GM23248 (cell line): ENCODE measurements at regions of chr6 and their contacts with region 1.

Region 1: GRCh38 chr6:134097114-134097707 is 44.8 kb upstream of the SLC2A12 start:
- DNase-seq: peak; percentile 79
- H3K4me3 ChIP-seq: no peak overlapping the region
- H3K27ac ChIP-seq: no peak overlapping the region
- H3K4me1 ChIP-seq: no peaks in the 10 kb centered on the region
- H3K27me3 ChIP-seq: peaks cover 11% of the 10 kb centered on the region; the same call in 1 of the 2 replicates

Region 2: GRCh38 chr6:132962936-132963868 is 1134.0 kb before region 1 on chr6:
- in situ Hi-C with region 1: loop called (anchors 25 kb)
- DNase-seq: peak; percentile 73
- H3K4me3 ChIP-seq: no peak overlapping the region
- H3K27ac ChIP-seq: no peak overlapping the region
- H3K4me1 ChIP-seq: peaks cover 10% of the 10 kb centered on the region; the same call in 1 of the 2 replicates
- H3K27me3 ChIP-seq: peaks cover 19% of the 10 kb centered on the region; the same call in 1 of the 2 replicates

Region 3: GRCh38 chr6:133568970-133569889 is 528.0 kb before region 1 on chr6:
- in situ Hi-C with region 1: loop called (anchors 10 kb)
- DNase-seq: peak; percentile 98
- H3K4me3 ChIP-seq: peak overlapping the region; percentile 72
- H3K27ac ChIP-seq: peak overlapping the region; percentile 87
- H3K4me1 ChIP-seq: peaks cover 25% of the 10 kb centered on the region
- H3K27me3 ChIP-seq: no peaks in the 10 kb centered on the region

Region 4: DNA sequence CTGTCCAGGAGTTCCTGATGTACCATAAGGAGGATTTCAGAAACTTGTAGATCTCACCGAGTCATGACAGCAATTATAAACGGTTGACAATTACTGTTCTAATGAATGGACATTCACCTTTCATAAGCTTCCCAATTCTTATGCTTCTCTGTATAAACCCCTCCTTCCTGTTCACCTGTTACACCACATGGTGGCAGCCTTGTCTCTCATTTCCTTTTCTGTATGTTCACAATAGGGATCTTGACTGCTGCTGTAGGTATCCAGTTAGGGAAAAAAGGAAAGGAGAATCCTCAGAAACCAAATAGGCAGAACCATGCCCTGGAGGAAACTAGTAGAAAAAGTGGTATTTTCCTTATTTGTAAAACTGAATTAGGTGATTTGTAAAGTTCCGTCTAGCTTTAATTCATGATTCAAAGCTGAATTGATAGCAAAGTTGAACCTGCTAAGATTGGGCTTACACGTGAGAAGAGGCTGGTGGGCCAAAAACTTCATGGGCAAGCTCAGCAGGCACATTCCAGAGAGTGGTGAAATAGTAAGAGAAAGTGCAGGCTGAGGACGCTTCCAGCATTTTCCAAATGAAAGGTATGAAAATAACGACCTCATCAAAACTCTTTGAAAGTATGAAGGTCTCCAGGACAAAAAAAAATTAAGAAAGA is 173.1 kb before region 1 on chr6:
- in situ Hi-C with region 1: loop called (anchors 5 kb)
- DNase-seq: peak; percentile 83
- H3K4me3 ChIP-seq: no peak overlapping the region
- H3K27ac ChIP-seq: no peak overlapping the region
- H3K4me1 ChIP-seq: no peaks in the 10 kb centered on the region
- H3K27me3 ChIP-seq: peaks cover 24% of the 10 kb centered on the region

Region 5: DNA sequence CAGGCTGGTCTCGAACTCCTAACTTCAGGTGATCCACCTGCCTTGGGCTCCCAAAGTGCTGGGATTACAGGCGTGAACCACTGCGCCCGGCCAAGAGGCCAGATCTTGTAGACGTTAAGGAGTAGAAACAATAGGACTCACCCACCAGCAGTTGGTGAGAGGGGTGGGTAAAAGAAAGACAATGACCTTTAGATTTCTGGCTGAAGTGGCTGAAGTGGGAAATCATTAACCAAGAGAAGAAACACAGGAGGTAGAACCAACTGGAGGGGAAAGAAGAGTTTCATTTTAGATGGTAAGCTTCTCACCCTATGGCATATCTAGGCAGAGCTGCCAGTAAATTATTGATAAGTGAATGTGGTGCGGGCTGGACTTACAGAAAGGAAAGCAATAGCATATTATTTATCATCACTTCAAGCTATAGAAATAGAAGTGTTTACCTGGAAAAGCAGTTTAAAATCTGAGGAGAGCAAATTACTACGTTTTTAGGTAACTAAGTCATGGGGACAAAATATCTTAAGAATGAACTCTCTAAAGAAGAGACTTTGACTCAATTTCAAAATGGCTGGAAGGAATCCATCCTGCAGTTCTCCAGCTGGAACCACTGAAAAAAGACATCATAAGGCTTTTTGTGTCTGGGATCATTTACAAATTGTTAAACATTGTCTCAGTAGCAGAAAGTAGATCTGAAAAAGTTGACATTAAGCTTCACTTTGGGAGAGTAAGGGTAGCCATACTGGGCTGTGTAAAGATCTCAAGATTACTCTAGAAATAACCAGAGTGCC is 743.1 kb after region 1 on chr6:
- in situ Hi-C with region 1: no loop called
- DNase-seq: no peak
- H3K4me3 ChIP-seq: no peak overlapping the region
- H3K27ac ChIP-seq: no peak overlapping the region
- H3K4me1 ChIP-seq: peaks cover 13% of the 10 kb centered on the region
- H3K27me3 ChIP-seq: no peaks in the 10 kb centered on the region